ENCODE measurements at regions of chrX and their contacts with region 1.

Region 1: DNA sequence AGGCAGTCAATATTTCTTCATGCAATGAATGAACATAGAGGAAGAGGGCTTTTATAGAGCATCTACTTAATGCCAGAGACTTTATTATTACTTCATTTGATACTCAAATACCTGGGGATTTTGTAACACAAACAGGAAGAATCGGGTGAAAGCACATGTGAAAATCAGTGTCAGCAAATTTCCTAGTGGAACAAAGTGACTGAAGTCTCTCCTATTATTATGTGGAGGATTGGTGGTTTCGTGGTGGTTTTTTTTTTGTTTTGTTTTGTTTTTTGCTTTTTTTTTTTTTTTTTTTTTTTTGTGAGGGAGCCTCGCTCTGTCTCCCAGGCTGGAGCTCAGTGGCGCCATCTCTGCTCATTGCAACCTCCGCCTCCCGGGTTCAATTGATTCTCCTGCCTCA is 207.0 kb downstream of the RRAGB start:
- DNase-seq: no peak
- ATAC-seq: no peak
- H3K4me3 ChIP-seq: no peak overlapping the region
- H3K4me3 Mint-ChIP-seq: no peak overlapping the region
- H3K27ac ChIP-seq: no peak overlapping the region
- H3K27ac Mint-ChIP-seq: no peak overlapping the region
- H3K4me1 ChIP-seq: no peaks in the 10 kb centered on the region
- H3K4me1 Mint-ChIP-seq: no peaks in the 10 kb centered on the region
- H3K27me3 ChIP-seq: no peaks in the 10 kb centered on the region
- H3K27me3 Mint-ChIP-seq: peaks cover 0 to 8% of the 10 kb centered on the region in 2 donors

Region 2: DNA sequence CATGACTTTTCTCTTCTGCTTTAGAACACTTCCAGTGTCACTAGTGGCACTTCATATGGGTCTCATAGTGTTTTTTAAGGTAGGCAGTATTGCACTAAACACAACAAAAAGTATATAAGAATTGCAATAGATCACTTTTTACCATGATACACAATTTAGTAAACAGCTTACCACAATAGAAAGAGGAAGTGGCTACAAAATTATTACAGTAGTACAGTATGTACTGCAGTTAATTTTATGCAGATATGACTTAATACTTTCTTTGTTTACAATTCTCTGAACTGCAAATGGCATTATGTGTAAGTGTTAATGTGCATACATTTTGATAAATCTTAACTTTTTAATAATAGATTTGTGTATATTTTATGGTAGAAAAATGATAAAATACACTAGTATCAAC is 49.8 kb before region 1 on chrX:
- CTCF ChIA-PET with region 1: no interaction called
- POLR2A ChIA-PET with region 1: interaction called in 1 of 2 experiments, 12 read pairs
- DNase-seq: no peak
- ATAC-seq: no peak
- H3K4me3 ChIP-seq: no peak overlapping the region
- H3K4me3 Mint-ChIP-seq: no peak overlapping the region
- H3K27ac ChIP-seq: no peak overlapping the region
- H3K27ac Mint-ChIP-seq: no peak overlapping the region
- H3K4me1 ChIP-seq: no peaks in the 10 kb centered on the region
- H3K4me1 Mint-ChIP-seq: no peaks in the 10 kb centered on the region
- H3K27me3 ChIP-seq: peaks cover 0 to 8% of the 10 kb centered on the region in 2 experiments
- H3K27me3 Mint-ChIP-seq: peaks cover 9 to 17% of the 10 kb centered on the region in 2 donors